H1 (cell line): ENCODE measurements at regions of chr3 and their contacts with region 1.

Region 1: GRCh38 chr3:152071924-152072323 is 196.8 kb upstream of the MBNL1 start:
- DNase-seq: no peak
- H3K4me3 ChIP-seq: no peak overlapping the region
- H3K27ac ChIP-seq: no peak overlapping the region
- H3K4me1 ChIP-seq: no peaks in the 10 kb centered on the region
- H3K27me3 ChIP-seq: no peaks in the 10 kb centered on the region
- CTCF ChIP-seq: peak in 2 of 3 experiments; percentile 61 to 66; a peak in 3 of 4 replicates
- EP300 ChIP-seq: no peak
- POLR2A ChIP-seq: no peak
- RAD21 ChIP-seq: peak; percentile 74 to 85

Region 2: DNA sequence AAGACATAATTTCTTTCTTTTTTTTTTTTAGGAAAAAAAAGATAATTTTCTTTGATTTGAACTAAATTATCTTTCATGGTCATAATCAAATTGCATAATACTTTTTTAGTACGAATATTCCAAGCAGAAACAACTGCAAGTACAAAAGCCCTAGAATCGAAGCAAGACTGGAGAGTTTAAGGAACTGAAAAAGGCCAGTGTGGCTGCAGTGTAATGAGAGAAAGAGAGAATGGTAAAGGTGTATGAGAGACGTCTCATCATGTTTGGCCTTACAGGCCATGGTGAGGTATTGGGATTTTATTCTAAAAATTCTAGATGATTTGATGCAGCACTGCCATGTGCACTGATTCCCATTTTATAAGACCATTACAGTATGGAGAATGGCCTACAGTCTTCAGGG is 17.6 kb before region 1 on chr3:
- CTCF ChIA-PET with region 1: interaction called, 13 read pairs
- POLR2A ChIA-PET with region 1: no interaction called
- DNase-seq: no peak
- H3K4me3 ChIP-seq: no peak overlapping the region
- H3K27ac ChIP-seq: no peak overlapping the region
- H3K4me1 ChIP-seq: no peaks in the 10 kb centered on the region
- H3K27me3 ChIP-seq: no peaks in the 10 kb centered on the region
- CTCF ChIP-seq: no peak
- EP300 ChIP-seq: no peak
- POLR2A ChIP-seq: no peak
- RAD21 ChIP-seq: no peak

Region 3: DNA sequence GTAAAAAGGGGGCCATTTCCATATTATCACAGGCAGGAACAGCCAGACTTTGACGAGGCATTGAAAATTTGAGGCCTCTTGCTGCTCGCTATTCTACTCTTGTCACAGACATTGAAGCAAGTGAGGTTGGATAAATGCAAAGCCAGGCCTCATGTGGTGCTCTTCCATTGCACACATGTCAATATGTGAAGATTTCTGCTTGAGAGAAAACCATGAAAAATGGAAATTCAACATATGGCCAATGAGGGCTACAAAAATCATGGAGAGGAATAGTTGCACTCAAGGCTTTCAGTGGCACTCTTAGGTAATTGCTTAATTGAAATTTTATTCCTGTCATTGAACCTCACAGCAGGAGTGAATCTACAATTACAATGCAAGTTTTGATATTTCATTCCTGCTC is 11.2 kb after region 1 on chr3:
- CTCF ChIA-PET with region 1: interaction called, 15 read pairs
- POLR2A ChIA-PET with region 1: no interaction called
- DNase-seq: no peak
- H3K4me3 ChIP-seq: no peak overlapping the region
- H3K27ac ChIP-seq: no peak overlapping the region
- H3K4me1 ChIP-seq: peaks cover 0 to 6% (median 2%) of the 10 kb centered on the region in 4 experiments; a peak in 3 of 7 replicates
- H3K27me3 ChIP-seq: no peaks in the 10 kb centered on the region
- CTCF ChIP-seq: no peak
- EP300 ChIP-seq: no peak
- POLR2A ChIP-seq: no peak
- RAD21 ChIP-seq: no peak

Region 4: GRCh38 chr3:152091725-152092124 is 19.8 kb after region 1 on chr3:
- CTCF ChIA-PET with region 1: interaction called, 10 read pairs
- POLR2A ChIA-PET with region 1: no interaction called
- DNase-seq: no peak
- H3K4me3 ChIP-seq: no peak overlapping the region
- H3K27ac ChIP-seq: no peak overlapping the region
- H3K4me1 ChIP-seq: no peaks in the 10 kb centered on the region
- H3K27me3 ChIP-seq: no peaks in the 10 kb centered on the region
- CTCF ChIP-seq: no peak
- EP300 ChIP-seq: no peak
- POLR2A ChIP-seq: no peak
- RAD21 ChIP-seq: no peak

Region 5: GRCh38 chr3:152444029-152444641 is 372.2 kb after region 1 on chr3:
- CTCF ChIA-PET with region 1: interaction called, 21 read pairs
- POLR2A ChIA-PET with region 1: no interaction called
- DNase-seq: no peak
- H3K4me3 ChIP-seq: no peak overlapping the region
- H3K27ac ChIP-seq: no peak overlapping the region
- H3K4me1 ChIP-seq: no peaks in the 10 kb centered on the region
- H3K27me3 ChIP-seq: no peaks in the 10 kb centered on the region
- CTCF ChIP-seq: peak in 2 of 3 experiments; percentile 41 to 50; a peak in 2 of 4 replicates
- EP300 ChIP-seq: no peak
- POLR2A ChIP-seq: no peak
- RAD21 ChIP-seq: peak; percentile 76 to 77